Ovary (tissue), 10 donors: ENCODE measurements at regions of chr2 and their contacts with region 1.

Region 1: GRCh38 chr2:219560037-219560892 is 11.1 kb downstream of the OBSL1 start:
- DNase-seq: peak; percentile 21 to 48 (median 28)
- H3K4me3 ChIP-seq: no peak overlapping the region
- H3K27ac ChIP-seq: peak overlapping the region in 1 of 2 donors; percentile 38
- H3K4me1 ChIP-seq: peaks cover 4% of the 10 kb centered on the region
- H3K27me3 ChIP-seq: no peaks in the 10 kb centered on the region
- CTCF ChIP-seq: peak; percentile 25 to 49 (median 32)
- EP300 ChIP-seq: no peak
- POLR2A ChIP-seq: no peak

Region 2: GRCh38 chr2:219627103-219628100 is 67.1 kb after region 1 on chr2 and contains the start of gene SLC4A3:
- intact Hi-C with region 1: loop called in 1 of 4 experiments (anchors 5 kb)
- DNase-seq: peak; percentile 58 to 74 (median 69)
- H3K4me3 ChIP-seq: peak within 1 kb of the TSS; percentile 48
- H3K27ac ChIP-seq: peak within 1 kb of the TSS; percentile 71 to 97
- H3K4me1 ChIP-seq: peaks cover 12% of the 10 kb centered on the region
- H3K27me3 ChIP-seq: no peaks in the 10 kb centered on the region
- CTCF ChIP-seq: no peak
- EP300 ChIP-seq: no peak
- POLR2A ChIP-seq: no peak
- total RNA-seq, gene SLC4A3: 29.6 to 232 (median 106) TPM